ENCODE measurements at regions of chr12 and their contacts with region 1.

Region 1: DNA sequence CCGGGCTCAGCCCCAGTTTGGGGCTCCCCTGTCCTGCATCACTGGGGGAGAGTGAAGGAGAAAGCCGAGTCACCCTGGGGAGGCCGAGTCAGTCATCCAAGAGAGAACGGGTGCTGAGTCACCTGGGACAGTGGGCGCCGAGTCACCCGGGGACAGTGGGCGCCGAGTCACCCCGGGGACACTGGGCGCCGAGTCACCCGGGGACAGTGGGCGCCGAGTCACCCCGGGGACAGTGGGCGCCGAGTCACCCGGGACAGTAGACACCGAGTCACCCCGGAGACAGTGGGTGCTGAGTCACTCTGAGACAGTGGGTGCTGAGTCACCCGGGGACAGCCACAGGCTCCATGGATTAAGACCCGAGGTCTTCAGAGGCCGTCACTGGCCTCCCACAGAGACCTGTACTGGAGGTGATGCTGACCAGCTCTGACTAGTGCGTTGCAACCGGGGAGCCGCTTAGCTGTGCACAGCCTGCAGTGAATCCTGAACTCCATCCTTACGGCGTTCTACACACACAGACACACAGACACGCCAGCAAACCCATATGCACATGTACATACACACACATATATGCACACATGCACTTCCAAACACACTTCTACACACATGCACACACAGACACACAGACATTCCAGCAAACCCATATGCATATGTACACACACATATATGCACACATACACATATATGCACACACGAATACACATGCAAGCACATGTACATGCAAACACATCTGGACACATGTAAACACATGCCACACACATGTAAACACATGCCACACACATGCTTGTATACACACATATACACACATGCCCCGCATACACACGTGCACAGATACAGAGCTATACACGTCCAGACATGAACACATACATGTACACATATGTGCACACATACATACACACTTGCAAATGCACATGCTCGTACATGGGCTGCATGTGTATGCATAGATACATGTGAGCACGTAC is 64.9 kb upstream of the GALNT9 start:
- DNase-seq: no peak
- ATAC-seq: no peak
- H3K4me3 ChIP-seq: no peak overlapping the region
- H3K27ac ChIP-seq: no peak overlapping the region
- H3K4me1 ChIP-seq: no peaks in the 10 kb centered on the region
- H3K27me3 ChIP-seq: peaks cover 27 to 38% (median 28%) of the 10 kb centered on the region in 3 donors
- CTCF ChIP-seq: no peak
- POLR2A ChIP-seq: no peak

Region 2: GRCh38 chr12:130702966-130703732 is 1691.1 kb before region 1 on chr12:
- in situ Hi-C with region 1: no loop called
- intact Hi-C with region 1: no loop called
- DNase-seq: no peak
- ATAC-seq: no peak
- H3K4me3 ChIP-seq: no peak overlapping the region
- H3K27ac ChIP-seq: no peak overlapping the region
- H3K4me1 ChIP-seq: no peaks in the 10 kb centered on the region
- H3K27me3 ChIP-seq: peaks cover 0 to 3% (median 0%) of the 10 kb centered on the region in 3 donors
- CTCF ChIP-seq: no peak
- POLR2A ChIP-seq: no peak

Region 3: DNA sequence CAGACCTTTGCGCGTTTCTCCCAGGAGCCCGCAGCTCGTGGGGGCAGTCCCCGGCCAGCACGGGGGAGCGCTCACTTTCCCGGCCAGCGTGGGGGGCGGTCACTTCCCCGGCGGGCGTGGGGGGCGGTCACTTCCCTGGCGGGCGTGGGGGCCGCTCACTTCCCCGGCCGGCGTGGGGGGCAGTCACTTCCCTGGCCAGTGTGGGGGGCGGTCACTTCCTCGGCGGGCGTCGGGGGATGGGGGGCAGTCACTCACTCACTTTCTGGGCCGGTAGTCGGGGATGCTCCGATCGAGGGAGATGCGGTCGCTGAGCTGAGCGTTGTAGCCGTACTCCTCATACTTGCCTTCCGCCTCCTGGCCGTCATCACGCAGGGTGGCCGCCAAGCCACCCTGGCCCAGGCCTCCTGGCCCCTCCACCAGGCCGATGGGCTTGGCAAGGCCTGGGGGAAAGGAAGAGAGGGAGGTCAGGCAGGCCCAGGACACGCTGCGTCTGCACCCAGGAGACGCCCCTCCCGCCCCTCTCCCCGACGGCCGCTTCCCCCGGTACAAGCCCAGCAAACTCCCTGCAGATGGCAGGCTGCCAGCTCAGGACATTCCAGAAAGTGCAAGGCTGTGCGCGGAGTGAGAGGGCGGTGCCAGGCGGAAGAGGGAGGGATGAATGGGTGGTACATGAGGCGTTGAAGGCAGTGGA is 108.1 kb before region 1 on chr12:
- in situ Hi-C with region 1: loop called in 1 of 4 experiments (anchors 25 kb)
- intact Hi-C with region 1: no loop called
- DNase-seq: no peak
- ATAC-seq: no peak
- H3K4me3 ChIP-seq: no peak overlapping the region
- H3K27ac ChIP-seq: no peak overlapping the region
- H3K4me1 ChIP-seq: no peaks in the 10 kb centered on the region
- H3K27me3 ChIP-seq: peaks cover 58 to 82% (median 66%) of the 10 kb centered on the region in 3 donors
- CTCF ChIP-seq: no peak
- POLR2A ChIP-seq: no peak

Measured in gastrocnemius medialis (tissue), 4 donors.